Activated CD4-positive, alpha-beta memory T cell treated with anti-CD3 and anti-CD28 coated beads for 36 hours (primary cell): ENCODE measurements at regions of chr18 and their contacts with region 1.

Region 1: DNA sequence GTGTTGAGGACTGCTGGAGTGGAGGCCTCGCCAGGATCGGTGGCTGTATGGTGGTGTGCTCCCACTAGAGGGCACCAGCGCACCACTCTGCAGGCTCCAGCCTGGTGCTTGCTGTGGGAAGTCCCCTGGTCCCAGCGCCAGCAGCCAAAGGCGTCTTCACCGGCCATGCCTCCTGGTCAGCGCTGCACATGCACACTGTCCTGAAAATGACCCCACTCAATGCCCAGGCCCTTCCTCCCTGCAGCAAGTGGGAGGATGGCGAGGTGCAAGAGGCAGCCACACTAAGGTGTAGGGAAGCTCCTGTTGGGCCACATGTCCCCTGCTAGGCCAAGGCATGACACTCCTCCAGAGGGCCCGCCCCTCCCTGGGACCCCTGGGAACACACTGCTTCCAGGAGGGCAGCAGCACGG is 136.5 kb downstream of the CTIF start:
- DNase-seq: peak; percentile 87
- H3K4me3 Mint-ChIP-seq: no peak overlapping the region
- H3K27ac Mint-ChIP-seq: no peak overlapping the region
- H3K4me1 Mint-ChIP-seq: peaks cover 2% of the 10 kb centered on the region
- H3K27me3 Mint-ChIP-seq: no peaks in the 10 kb centered on the region

Region 2: GRCh38 chr18:48657447-48658120 is 17.8 kb before region 1 on chr18:
- CTCF ChIA-PET with region 1: no interaction called
- POLR2A ChIA-PET with region 1: no interaction called
- intact Hi-C with region 1: no loop called
- DNase-seq: no peak
- H3K4me3 Mint-ChIP-seq: no peak overlapping the region
- H3K27ac Mint-ChIP-seq: no peak overlapping the region
- H3K4me1 Mint-ChIP-seq: no peaks in the 10 kb centered on the region
- H3K27me3 Mint-ChIP-seq: no peaks in the 10 kb centered on the region

Region 3: GRCh38 chr18:48693625-48694262 is 18.4 kb after region 1 on chr18:
- CTCF ChIA-PET with region 1: no interaction called
- POLR2A ChIA-PET with region 1: no interaction called
- intact Hi-C with region 1: no loop called
- DNase-seq: no peak
- H3K4me3 Mint-ChIP-seq: no peak overlapping the region
- H3K27ac Mint-ChIP-seq: no peak overlapping the region
- H3K4me1 Mint-ChIP-seq: no peaks in the 10 kb centered on the region
- H3K27me3 Mint-ChIP-seq: no peaks in the 10 kb centered on the region

Region 4: DNA sequence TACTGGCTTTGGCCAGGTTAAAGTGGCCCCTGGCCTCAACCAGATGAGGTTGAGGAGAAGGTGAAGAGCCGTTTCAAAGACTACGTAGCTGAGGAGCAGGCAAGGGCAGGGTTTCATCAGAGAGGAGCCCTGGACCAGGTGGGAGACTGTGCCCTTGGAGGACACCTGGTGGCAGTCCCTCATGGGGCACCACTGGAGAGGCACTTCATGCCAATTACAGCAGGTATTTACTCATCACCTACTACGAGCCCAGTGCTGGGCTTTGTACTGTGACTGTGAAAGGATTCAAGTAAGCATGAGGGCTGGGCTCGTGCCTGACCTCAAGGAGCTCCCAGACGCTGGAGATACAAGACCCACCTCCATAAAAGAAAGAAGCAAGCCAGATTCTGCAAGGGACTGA is 237.8 kb after region 1 on chr18:
- CTCF ChIA-PET with region 1: no interaction called
- POLR2A ChIA-PET with region 1: no interaction called
- intact Hi-C with region 1: loop called (anchors 1 kb)
- DNase-seq: peak; percentile 70
- H3K4me3 Mint-ChIP-seq: no peak overlapping the region
- H3K27ac Mint-ChIP-seq: no peak overlapping the region
- H3K4me1 Mint-ChIP-seq: peaks cover 10% of the 10 kb centered on the region
- H3K27me3 Mint-ChIP-seq: no peaks in the 10 kb centered on the region

Region 5: GRCh38 chr18:49178736-49179135 is 503.4 kb after region 1 on chr18:
- CTCF ChIA-PET with region 1: interaction called, 7 read pairs
- POLR2A ChIA-PET with region 1: no interaction called
- intact Hi-C with region 1: loop called (anchors 2 kb)
- DNase-seq: no peak
- H3K4me3 Mint-ChIP-seq: no peak overlapping the region
- H3K27ac Mint-ChIP-seq: no peak overlapping the region
- H3K4me1 Mint-ChIP-seq: peaks cover 13% of the 10 kb centered on the region
- H3K27me3 Mint-ChIP-seq: no peaks in the 10 kb centered on the region

Region 6: DNA sequence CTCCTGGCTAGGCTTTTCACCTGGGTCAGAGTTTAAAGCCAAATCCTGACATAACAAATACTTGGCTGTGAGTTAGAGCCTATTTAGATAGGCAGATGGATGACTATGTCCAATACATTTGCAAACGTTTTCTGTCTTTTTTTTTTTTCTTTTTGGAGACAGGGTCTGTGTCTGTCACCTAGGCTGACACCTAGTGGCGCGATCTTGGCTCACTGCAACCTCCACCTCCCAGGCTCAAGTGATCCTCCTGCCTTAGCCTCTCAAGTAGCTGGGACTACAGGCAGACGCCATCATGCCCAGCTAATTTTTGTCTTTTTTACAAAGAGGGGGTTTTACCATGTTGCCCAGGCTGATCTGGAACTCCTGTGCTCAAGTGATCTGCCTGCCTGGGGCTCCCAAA is 660.3 kb after region 1 on chr18:
- CTCF ChIA-PET with region 1: interaction called, 4 read pairs
- POLR2A ChIA-PET with region 1: no interaction called
- intact Hi-C with region 1: loop called (anchors 5 kb)
- DNase-seq: peak; percentile 26
- H3K4me3 Mint-ChIP-seq: no peak overlapping the region
- H3K27ac Mint-ChIP-seq: no peak overlapping the region
- H3K4me1 Mint-ChIP-seq: no peaks in the 10 kb centered on the region
- H3K27me3 Mint-ChIP-seq: no peaks in the 10 kb centered on the region

Region 7: DNA sequence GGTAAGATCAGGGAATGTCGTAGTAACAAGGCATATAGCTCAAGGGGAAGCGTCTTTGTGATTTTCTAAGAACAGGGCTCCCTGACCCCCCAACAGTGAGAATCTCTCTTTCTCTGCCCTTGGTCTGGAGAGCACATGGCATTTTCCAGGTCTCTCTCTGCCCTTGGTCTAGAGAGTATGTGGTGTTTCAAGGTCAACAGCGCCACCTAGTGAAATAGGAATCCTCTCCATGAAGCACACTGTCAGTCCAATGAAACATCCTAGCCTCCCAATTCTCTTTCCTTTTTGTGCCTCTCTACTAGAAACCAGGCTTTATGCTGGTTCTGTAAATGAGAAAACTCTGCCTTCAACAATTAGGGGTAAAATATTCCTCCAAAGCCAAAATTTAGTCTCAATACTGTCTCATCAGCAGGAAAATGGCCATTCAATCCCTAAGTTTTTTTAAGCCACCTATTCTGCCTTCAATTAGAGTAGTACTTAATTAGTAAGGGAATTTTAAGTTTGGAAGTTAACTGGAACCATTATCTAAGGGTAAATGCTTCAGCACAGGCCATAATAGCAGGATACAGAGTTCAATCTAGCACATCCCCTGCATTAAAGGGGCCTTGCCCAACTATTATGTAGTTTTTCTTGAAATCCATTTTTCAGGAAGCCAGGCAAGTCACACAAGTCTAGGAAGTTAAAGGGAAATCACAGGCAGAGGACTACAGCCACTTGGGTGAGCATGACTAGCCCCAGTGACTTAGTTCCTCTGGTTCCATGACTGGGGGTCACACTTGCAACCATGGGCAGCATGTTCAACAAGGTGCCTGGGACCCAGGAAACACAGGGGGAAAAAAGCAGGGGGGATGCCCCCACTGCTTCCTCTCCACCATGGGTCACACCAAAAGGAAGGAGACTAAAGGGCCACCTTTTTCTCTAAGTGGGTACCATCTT is 772.7 kb after region 1 on chr18:
- CTCF ChIA-PET with region 1: interaction called, 6 read pairs
- POLR2A ChIA-PET with region 1: no interaction called
- intact Hi-C with region 1: loop called (anchors 5 kb)
- DNase-seq: peak; percentile 42
- H3K4me3 Mint-ChIP-seq: no peak overlapping the region
- H3K27ac Mint-ChIP-seq: no peak overlapping the region
- H3K4me1 Mint-ChIP-seq: peaks cover 14% of the 10 kb centered on the region
- H3K27me3 Mint-ChIP-seq: no peaks in the 10 kb centered on the region